PC-9 (cell line): ENCODE measurements at regions of chr4 and their contacts with region 1.

Region 1: DNA sequence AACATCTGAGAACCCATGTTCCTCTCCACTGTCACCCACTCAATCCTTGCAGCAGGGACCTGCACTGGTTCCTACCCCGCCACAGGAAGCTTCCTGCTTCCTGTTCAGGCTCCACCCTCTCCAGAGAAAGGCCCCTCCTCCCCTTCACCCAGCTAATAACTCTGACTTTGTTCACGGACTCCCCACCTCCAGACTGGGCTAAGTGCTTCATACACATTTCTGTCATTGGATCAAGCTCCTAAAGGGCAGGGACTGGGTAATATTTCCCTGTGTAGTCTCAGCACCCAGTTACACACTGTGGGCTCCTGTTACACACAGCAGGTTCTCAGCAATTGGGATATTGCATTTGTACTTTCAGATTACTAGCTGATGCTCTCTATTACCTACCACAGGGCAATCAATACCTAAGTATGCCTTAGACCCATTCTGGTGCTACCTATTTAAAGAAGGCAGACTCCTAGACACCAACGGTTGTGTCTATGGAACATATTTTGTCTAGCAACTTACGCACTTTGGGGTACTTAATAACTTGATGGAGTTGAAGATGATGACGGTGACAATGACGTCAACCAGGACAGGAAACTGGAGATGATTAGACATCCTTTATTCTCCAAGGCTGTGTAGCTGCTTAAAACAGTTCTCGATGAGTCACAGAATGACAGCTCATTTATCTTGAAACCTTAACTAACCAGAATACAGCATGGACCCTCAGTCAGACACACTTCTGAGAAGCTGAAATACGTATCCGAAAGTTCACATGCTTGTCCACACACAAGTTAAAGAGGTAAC is 58.1 kb downstream of the MAML3 start:
- DNase-seq: peak; percentile 46 to 68
- H3K4me3 ChIP-seq: no peak overlapping the region; the same call in 1 of the 2 replicates
- H3K27ac ChIP-seq: peak overlapping the region; percentile 99
- H3K4me1 ChIP-seq: peaks cover 98% of the 10 kb centered on the region
- H3K27me3 ChIP-seq: no peaks in the 10 kb centered on the region
- CTCF ChIP-seq: no peak

Region 2: GRCh38 chr4:140049024-140049848 is 46.7 kb before region 1 on chr4:
- CTCF ChIA-PET with region 1: no interaction called
- POLR2A ChIA-PET with region 1: interaction called, 7 read pairs
- intact Hi-C with region 1: loop called (anchors 2 kb)
- DNase-seq: peak; percentile 59 to 62
- H3K4me3 ChIP-seq: peak overlapping the region; percentile 56
- H3K27ac ChIP-seq: peak overlapping the region; percentile 96
- H3K4me1 ChIP-seq: peaks cover 62% of the 10 kb centered on the region
- H3K27me3 ChIP-seq: no peaks in the 10 kb centered on the region
- CTCF ChIP-seq: no peak

Region 3: DNA sequence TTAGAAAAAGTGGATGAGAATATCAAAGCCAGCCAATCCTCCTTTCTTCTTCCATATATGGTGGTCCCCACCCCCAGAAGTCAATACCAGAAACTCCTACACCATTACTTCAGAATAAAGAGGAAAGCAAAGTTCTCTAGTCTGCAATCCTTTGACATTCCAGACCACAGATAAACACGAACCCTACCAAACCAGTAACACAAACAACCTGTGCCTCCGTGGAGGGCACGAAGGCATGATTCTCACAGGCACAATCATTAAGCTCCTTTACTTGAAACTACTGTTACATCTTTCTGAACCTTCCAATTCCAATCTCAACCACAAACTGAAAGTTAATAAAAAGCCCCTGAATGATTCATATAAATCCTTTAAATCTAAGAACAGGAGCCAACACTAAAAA is 41.8 kb after region 1 on chr4:
- CTCF ChIA-PET with region 1: interaction called, 3 read pairs
- POLR2A ChIA-PET with region 1: interaction called, 4 read pairs
- intact Hi-C with region 1: loop called (anchors 1 kb)
- DNase-seq: peak in 1 of 2 experiments; percentile 84
- H3K4me3 ChIP-seq: peak overlapping the region; percentile 50; the same call in 1 of the 2 replicates
- H3K27ac ChIP-seq: peak overlapping the region; percentile 99
- H3K4me1 ChIP-seq: peaks cover 95% of the 10 kb centered on the region
- H3K27me3 ChIP-seq: no peaks in the 10 kb centered on the region
- CTCF ChIP-seq: no peak

Region 4: GRCh38 chr4:140252742-140253555 is 157.1 kb after region 1 on chr4:
- CTCF ChIA-PET with region 1: interaction called, 6 read pairs
- POLR2A ChIA-PET with region 1: interaction called, 5 read pairs
- intact Hi-C with region 1: loop called (anchors 2 kb)
- DNase-seq: peak; percentile 40 to 76
- H3K4me3 ChIP-seq: peak overlapping the region; percentile 59
- H3K27ac ChIP-seq: peak overlapping the region; percentile 73
- H3K4me1 ChIP-seq: peaks cover 69% of the 10 kb centered on the region
- H3K27me3 ChIP-seq: no peaks in the 10 kb centered on the region
- CTCF ChIP-seq: peak; percentile 84

Region 5: DNA sequence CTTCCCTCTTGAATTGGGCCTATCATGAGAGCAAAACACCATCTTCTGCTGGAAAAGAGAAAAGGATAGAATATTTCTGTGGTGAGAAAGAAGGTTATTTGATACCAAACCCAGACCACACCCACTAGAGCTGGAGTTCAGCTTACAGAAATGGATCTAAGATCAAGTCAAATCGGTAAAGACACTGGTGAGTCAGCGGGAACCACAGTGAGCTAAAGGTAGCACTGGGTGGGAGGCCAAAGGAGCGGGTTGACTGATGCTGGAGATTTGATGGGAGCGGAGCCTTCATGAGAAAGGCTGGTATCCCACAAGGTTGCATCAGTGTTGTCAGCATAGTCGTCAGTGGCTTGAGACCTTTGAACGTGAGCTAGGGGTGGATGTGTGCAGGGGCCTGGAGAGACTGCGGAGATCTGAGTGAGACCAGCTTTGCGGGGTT is 171.1 kb after region 1 on chr4:
- CTCF ChIA-PET with region 1: no interaction called
- POLR2A ChIA-PET with region 1: interaction called, 4 read pairs
- intact Hi-C with region 1: loop called (anchors 2 kb)
- DNase-seq: peak; percentile 73 to 95
- H3K4me3 ChIP-seq: peak overlapping the region; percentile 55
- H3K27ac ChIP-seq: peak overlapping the region; percentile 99
- H3K4me1 ChIP-seq: peaks cover 30% of the 10 kb centered on the region
- H3K27me3 ChIP-seq: no peaks in the 10 kb centered on the region
- CTCF ChIP-seq: no peak

Region 6: GRCh38 chr4:140662055-140662454 is 566.2 kb after region 1 on chr4:
- CTCF ChIA-PET with region 1: no interaction called
- POLR2A ChIA-PET with region 1: interaction called, 10 read pairs
- intact Hi-C with region 1: no loop called
- DNase-seq: no peak
- H3K4me3 ChIP-seq: no peak overlapping the region
- H3K27ac ChIP-seq: no peak overlapping the region
- H3K4me1 ChIP-seq: peaks cover 14% of the 10 kb centered on the region
- H3K27me3 ChIP-seq: no peaks in the 10 kb centered on the region
- CTCF ChIP-seq: no peak